Left ventricle myocardium superior (tissue), 1 donor: ENCODE measurements at regions of chr2 and their contacts with region 1.

Region 1: GRCh38 chr2:173027181-173028128 is 48.2 kb upstream of the MAP3K20 start:
- DNase-seq: peak; percentile 66
- ATAC-seq: peak; percentile 88

Region 2: DNA sequence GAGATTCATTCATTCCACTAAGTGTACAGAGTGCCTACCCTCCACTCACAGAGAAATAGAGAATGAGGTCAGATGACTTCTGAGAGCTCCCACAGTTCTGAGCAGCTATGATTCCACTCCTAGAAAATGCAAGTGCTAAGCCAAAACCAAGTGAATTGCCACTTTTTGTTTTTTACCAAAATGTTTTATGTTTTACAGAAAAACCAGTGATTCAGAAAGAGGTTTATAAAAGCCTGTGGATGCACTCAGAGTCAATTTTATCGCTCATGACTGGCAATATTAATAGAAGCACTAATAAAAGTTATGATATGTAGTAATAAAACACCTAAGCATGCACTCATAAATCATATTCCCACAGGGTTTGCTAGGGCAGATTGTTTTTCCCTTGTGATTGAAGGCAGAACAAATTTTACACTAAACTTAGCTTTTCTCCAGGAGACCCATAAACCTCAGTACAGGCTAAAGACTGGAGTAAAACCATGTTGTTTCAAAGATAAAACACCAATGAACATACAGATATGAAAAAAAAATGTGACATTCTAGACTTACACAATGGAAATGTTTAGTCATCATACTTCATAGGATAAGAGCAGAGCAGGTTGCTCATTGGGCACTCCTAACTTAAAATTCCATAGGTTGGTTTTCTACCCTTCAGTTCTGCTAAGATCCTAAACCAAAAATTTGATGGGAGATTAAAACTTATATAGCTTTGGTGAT is 404.0 kb before region 1 on chr2:
- intact Hi-C with region 1: no loop called
- DNase-seq: no peak
- ATAC-seq: no peak

Region 3: DNA sequence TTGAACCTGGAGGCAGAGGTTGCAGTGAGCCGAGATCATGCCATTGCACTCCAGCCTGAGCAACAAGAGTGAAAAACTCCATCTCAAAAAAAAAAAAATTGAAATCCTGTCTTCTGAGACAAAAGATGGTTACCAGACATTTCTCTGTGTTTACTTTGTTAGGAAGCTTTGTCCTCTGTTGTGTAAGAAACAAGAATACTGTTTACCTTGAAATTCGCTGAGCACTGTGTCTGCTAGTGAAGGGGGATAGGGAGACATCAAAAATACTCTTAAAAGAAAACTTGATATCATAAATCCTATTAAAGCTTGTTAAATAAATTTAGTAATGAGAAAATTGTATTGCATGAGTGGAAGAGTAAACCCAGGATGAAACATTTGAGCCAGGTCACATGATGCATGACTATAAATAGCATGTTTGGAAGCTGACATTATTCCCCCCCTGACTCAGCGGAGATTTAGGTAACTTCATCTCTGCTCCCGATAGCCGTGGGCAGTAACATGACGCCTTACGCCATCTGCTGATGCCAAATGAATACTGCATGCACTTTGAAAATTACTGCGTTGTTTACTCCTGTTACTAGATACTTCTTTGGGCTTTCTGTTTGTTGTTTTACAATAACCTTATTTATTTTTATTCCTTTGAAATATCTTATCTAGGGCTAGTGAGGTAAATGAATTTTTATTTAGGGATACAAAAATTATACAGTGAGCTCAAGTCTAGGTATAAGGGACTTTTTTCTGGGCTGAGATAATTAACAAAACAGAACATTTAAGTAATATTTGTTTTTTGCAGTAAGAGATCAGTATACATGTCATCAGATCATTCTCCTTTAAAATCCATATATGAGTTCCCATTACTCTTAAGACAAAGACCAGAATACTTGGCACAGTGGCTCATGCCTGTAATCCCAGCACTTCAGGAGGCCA is 183.1 kb after region 1 on chr2:
- intact Hi-C with region 1: loop called (anchors 2 kb)
- DNase-seq: peak; percentile 41
- ATAC-seq: peak; percentile 87